Activated B cell treated with CpG ODN at 0.5 μM for 24 hours (primary cell): ENCODE measurements at regions of chr3 and their contacts with region 1.

Region 1: DNA sequence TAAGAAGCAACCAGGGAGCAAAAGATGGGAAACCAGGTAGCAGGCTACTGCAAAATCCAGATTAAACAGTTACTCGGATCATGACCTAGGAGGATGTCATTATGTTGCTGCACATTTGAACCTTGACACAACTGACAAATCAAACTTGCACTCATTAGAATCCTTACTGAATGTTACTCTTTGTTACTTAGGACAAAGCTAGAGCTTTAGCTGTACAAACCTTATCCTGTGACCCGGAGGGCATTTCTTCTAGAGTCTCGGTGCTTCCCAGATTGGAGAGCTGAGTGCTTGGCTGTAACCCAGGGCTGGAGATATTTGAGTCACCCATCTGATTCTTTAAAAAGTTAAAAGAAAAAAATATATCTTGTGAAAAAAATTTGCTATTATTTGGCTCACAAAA is 43.4 kb downstream of the DCP1A start:
- DNase-seq: no peak
- ATAC-seq: no peak
- H3K4me3 Mint-ChIP-seq: no peak overlapping the region
- H3K27ac Mint-ChIP-seq: no peak overlapping the region
- H3K4me1 Mint-ChIP-seq: peaks cover 2% of the 10 kb centered on the region
- H3K27me3 Mint-ChIP-seq: no peaks in the 10 kb centered on the region
- CTCF ChIP-seq: no peak

Region 2: DNA sequence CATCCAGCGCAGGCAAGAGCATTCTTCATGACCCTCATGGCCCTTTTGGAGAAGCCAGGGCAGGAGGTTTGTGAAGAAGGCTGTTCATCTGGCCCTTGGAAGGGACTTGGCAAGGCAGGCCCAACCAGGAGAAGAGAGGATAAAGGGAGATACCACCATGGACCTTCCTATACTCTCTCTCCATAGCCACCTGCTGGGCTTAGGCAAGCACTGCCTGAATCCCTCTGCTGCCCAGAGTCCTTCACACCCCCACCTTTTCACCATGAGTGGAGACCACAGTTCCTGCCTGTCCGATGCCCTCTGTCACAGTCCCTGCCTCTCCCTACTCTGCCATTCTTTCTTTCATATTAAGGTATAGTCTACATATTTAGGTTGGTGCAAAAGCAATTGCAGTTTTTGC is 247.5 kb before region 1 on chr3:
- CTCF ChIA-PET with region 1: no interaction called
- POLR2A ChIA-PET with region 1: no interaction called
- intact Hi-C with region 1: no loop called
- DNase-seq: no peak
- ATAC-seq: peak; percentile 49
- H3K4me3 Mint-ChIP-seq: no peak overlapping the region
- H3K27ac Mint-ChIP-seq: no peak overlapping the region
- H3K4me1 Mint-ChIP-seq: no peaks in the 10 kb centered on the region
- H3K27me3 Mint-ChIP-seq: no peaks in the 10 kb centered on the region
- CTCF ChIP-seq: no peak

Region 3: DNA sequence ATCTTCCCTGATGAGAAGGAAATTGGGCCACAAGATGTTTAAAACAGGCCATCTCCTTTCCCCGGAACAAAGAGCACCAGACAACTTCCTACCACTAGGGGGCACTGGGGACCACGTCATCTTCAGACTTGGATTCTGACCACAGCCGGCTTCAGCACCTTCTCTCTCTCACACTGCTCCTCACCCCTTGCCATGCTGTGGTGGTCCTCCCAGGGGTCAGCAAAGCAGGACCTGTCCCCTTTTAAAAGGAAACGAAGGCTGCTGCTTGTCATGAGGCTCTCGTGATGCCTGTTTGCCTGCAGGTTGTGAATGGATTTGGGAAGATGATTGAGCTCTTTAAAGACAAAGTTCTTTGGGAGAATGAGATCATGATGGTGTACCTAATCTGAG is 190.0 kb before region 1 on chr3:
- CTCF ChIA-PET with region 1: no interaction called
- POLR2A ChIA-PET with region 1: no interaction called
- intact Hi-C with region 1: loop called (anchors 2 kb)
- DNase-seq: peak; percentile 62
- ATAC-seq: peak; percentile 96
- H3K4me3 Mint-ChIP-seq: no peak overlapping the region
- H3K27ac Mint-ChIP-seq: no peak overlapping the region
- H3K4me1 Mint-ChIP-seq: no peaks in the 10 kb centered on the region
- H3K27me3 Mint-ChIP-seq: no peaks in the 10 kb centered on the region
- CTCF ChIP-seq: no peak

Region 4: DNA sequence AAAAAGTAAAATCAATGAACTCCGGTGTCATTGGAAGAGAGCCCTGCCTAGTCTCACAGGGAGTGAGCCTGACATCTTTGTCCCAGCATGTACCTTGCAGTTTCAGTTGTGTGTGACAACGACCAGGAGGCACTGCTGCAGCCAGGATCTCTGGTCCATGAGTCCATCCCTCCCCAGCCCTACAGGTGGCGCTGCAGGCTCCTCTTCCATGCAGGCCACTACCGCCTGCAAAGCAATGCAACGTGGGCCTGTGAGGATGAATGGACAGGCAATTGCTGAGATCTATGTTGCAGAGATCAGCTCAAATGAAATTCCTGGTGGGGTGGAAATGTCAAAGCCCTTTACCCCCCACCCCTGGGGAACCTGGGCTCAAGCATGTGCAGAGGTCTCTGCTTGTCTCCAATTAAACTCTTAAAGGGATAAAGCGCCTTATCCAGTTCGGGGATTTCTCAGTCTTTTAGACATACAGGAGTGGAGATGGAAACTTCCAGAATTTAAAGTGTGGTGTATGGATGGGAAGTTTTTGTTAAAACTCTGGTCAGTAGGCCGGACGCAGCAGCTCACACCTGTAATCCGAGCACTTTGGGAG is 84.0 kb before region 1 on chr3:
- CTCF ChIA-PET with region 1: no interaction called
- POLR2A ChIA-PET with region 1: no interaction called
- intact Hi-C with region 1: loop called (anchors 1 kb)
- DNase-seq: peak; percentile 53
- ATAC-seq: peak; percentile 81
- H3K4me3 Mint-ChIP-seq: no peak overlapping the region
- H3K27ac Mint-ChIP-seq: no peak overlapping the region
- H3K4me1 Mint-ChIP-seq: peaks cover 13% of the 10 kb centered on the region
- H3K27me3 Mint-ChIP-seq: no peaks in the 10 kb centered on the region
- CTCF ChIP-seq: no peak

Region 5: DNA sequence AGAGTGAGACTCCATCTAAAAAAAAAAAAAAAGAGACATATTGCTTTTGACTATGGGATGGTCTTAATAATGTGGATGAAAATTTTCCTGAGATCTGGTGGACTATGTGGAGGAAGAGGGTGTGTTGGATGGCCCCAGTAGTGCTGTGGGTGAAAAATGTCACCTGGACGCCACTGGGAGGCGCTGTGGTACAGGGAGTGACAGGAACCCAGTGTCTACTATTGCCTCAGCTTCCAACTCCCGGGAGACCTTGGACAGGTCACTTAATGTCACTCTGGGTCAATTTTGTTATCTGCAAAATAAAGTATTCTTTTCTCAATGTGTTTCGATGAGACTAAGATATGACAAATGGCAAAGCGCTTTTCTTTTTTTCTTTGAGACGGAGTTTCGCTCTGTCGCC is 71.1 kb after region 1 on chr3:
- CTCF ChIA-PET with region 1: no interaction called
- POLR2A ChIA-PET with region 1: no interaction called
- intact Hi-C with region 1: no loop called
- DNase-seq: peak; percentile 29
- ATAC-seq: peak; percentile 42
- H3K4me3 Mint-ChIP-seq: no peak overlapping the region
- H3K27ac Mint-ChIP-seq: no peak overlapping the region
- H3K4me1 Mint-ChIP-seq: no peaks in the 10 kb centered on the region
- H3K27me3 Mint-ChIP-seq: peaks cover 25% of the 10 kb centered on the region
- CTCF ChIP-seq: no peak

Region 6: GRCh38 chr3:53863145-53863544 is 559.2 kb after region 1 on chr3:
- CTCF ChIA-PET with region 1: no interaction called
- POLR2A ChIA-PET with region 1: no interaction called
- intact Hi-C with region 1: loop called (anchors 1 kb)
- DNase-seq: no peak
- ATAC-seq: no peak
- H3K4me3 Mint-ChIP-seq: no peak overlapping the region
- H3K27ac Mint-ChIP-seq: no peak overlapping the region
- H3K4me1 Mint-ChIP-seq: peaks cover 29% of the 10 kb centered on the region
- H3K27me3 Mint-ChIP-seq: no peaks in the 10 kb centered on the region
- CTCF ChIP-seq: no peak